ENCODE measurements at regions of chr15 and their contacts with region 1.

Region 1: GRCh38 chr15:58770857-58771620 is at the start of gene MINDY2:
- DNase-seq: peak; percentile 96
- ATAC-seq: peak; percentile 96
- H3K4me3 ChIP-seq: peak within 1 kb of the TSS; percentile 81 to 94 (median 94)
- H3K27ac ChIP-seq: peak within 1 kb of the TSS; percentile 89
- H3K4me1 ChIP-seq: peaks cover 40% of the 10 kb centered on the region
- H3K27me3 ChIP-seq: no peaks in the 10 kb centered on the region; a peak in 1 of 5 replicates
- CTCF ChIP-seq: peak; percentile 74
- EP300 ChIP-seq: peak in 1 of 2 experiments; percentile 41; a peak in 1 of 4 replicates
- POLR2A ChIP-seq: peak; percentile 81 to 83; a peak in 3 of 4 replicates
- RAD21 ChIP-seq: no peak; the same call in 1 of the 2 replicates
- total RNA-seq, gene MINDY2: 12.6 and 15.6 TPM in 2 replicates

Region 2: GRCh38 chr15:58314593-58315216 is 456.3 kb before region 1 on chr15:
- CTCF ChIA-PET with region 1: no interaction called
- POLR2A ChIA-PET with region 1: no interaction called
- in situ Hi-C with region 1: no loop called
- intact Hi-C with region 1: no loop called
- DNase-seq: no peak
- ATAC-seq: no peak
- H3K4me3 ChIP-seq: no peak overlapping the region
- H3K27ac ChIP-seq: no peak overlapping the region
- H3K4me1 ChIP-seq: peaks cover 11% of the 10 kb centered on the region
- H3K27me3 ChIP-seq: no peaks in the 10 kb centered on the region
- CTCF ChIP-seq: no peak
- EP300 ChIP-seq: no peak
- POLR2A ChIP-seq: no peak
- RAD21 ChIP-seq: no peak

Region 3: GRCh38 chr15:58331903-58332675 is 438.9 kb before region 1 on chr15:
- CTCF ChIA-PET with region 1: no interaction called
- POLR2A ChIA-PET with region 1: interaction called, 19 read pairs
- in situ Hi-C with region 1: no loop called
- intact Hi-C with region 1: no loop called
- DNase-seq: peak; percentile 92
- ATAC-seq: peak; percentile 85
- H3K4me3 ChIP-seq: peak overlapping the region; percentile 26 to 67 (median 48)
- H3K27ac ChIP-seq: peak overlapping the region; percentile 74
- H3K4me1 ChIP-seq: peaks cover 50% of the 10 kb centered on the region
- H3K27me3 ChIP-seq: no peaks in the 10 kb centered on the region; a peak in 1 of 5 replicates
- CTCF ChIP-seq: no peak
- EP300 ChIP-seq: peak in 1 of 2 experiments; percentile 85; a peak in 2 of 4 replicates
- POLR2A ChIP-seq: peak; percentile 65 to 91
- RAD21 ChIP-seq: no peak

Region 4: GRCh38 chr15:58585693-58586443 is 185.2 kb before region 1 on chr15:
- CTCF ChIA-PET with region 1: no interaction called
- POLR2A ChIA-PET with region 1: no interaction called
- in situ Hi-C with region 1: no loop called
- intact Hi-C with region 1: no loop called
- DNase-seq: no peak
- ATAC-seq: peak; percentile 37; the same call in 2 of the 3 replicates
- H3K4me3 ChIP-seq: no peak overlapping the region
- H3K27ac ChIP-seq: no peak overlapping the region
- H3K4me1 ChIP-seq: no peaks in the 10 kb centered on the region
- H3K27me3 ChIP-seq: no peaks in the 10 kb centered on the region
- CTCF ChIP-seq: no peak
- EP300 ChIP-seq: no peak
- POLR2A ChIP-seq: no peak
- RAD21 ChIP-seq: no peak

Region 5: GRCh38 chr15:58749532-58750337 is 21.3 kb before region 1 on chr15 and contains the start of gene ADAM10:
- CTCF ChIA-PET with region 1: no interaction called
- POLR2A ChIA-PET with region 1: interaction called, 111 read pairs
- in situ Hi-C with region 1: no loop called
- intact Hi-C with region 1: loop called (anchors 1 kb)
- DNase-seq: peak; percentile 95
- ATAC-seq: peak; percentile 96
- H3K4me3 ChIP-seq: peak within 1 kb of the TSS; percentile 91 to 99 (median 95)
- H3K27ac ChIP-seq: peak within 1 kb of the TSS; percentile 97
- H3K4me1 ChIP-seq: peaks cover 32% of the 10 kb centered on the region
- H3K27me3 ChIP-seq: no peaks in the 10 kb centered on the region; a peak in 1 of 5 replicates
- CTCF ChIP-seq: peak; percentile 21; the same call in 1 of the 2 replicates
- EP300 ChIP-seq: no peak
- POLR2A ChIP-seq: peak; percentile 66 to 83
- RAD21 ChIP-seq: no peak
- total RNA-seq, gene ADAM10: 86.8 and 125 TPM in 2 replicates

Region 6: GRCh38 chr15:58793862-58794261 is 22.8 kb after region 1 on chr15:
- CTCF ChIA-PET with region 1: no interaction called
- POLR2A ChIA-PET with region 1: interaction called, 15 read pairs
- in situ Hi-C with region 1: no loop called
- intact Hi-C with region 1: no loop called
- DNase-seq: peak; percentile 73
- ATAC-seq: peak; percentile 73
- H3K4me3 ChIP-seq: no peak overlapping the region
- H3K27ac ChIP-seq: peak overlapping the region; percentile 39
- H3K4me1 ChIP-seq: peaks cover 18% of the 10 kb centered on the region
- H3K27me3 ChIP-seq: no peaks in the 10 kb centered on the region
- CTCF ChIP-seq: no peak
- EP300 ChIP-seq: no peak
- POLR2A ChIP-seq: no peak
- RAD21 ChIP-seq: no peak

Measured in HepG2 (cell line).